ENCODE measurements at regions of chr7 and their contacts with region 1.

Region 1: DNA sequence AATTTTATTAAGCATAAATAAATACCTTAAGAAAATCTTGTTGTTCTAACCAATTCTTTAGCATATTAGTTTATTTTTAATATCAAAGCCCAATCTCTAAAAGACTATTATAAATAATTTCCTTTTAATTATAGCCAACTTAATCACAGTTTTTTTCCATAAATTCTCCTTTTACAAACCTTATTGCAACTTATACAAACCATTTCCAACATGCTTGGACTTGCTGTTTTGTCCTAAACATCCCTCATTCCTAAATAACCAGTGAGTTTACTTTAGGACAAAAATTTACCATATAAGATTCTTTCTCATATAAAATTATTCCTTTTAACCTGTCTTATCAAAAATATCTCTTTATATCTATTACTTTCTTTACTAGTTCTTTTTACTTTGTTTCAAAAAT is 25.2 kb upstream of the LSM8 start:
- DNase-seq: peak; percentile 30
- H3K4me3 ChIP-seq: no peak overlapping the region
- H3K27ac ChIP-seq: no peak overlapping the region
- H3K4me1 ChIP-seq: no peaks in the 10 kb centered on the region
- CTCF ChIP-seq: no peak

Region 2: DNA sequence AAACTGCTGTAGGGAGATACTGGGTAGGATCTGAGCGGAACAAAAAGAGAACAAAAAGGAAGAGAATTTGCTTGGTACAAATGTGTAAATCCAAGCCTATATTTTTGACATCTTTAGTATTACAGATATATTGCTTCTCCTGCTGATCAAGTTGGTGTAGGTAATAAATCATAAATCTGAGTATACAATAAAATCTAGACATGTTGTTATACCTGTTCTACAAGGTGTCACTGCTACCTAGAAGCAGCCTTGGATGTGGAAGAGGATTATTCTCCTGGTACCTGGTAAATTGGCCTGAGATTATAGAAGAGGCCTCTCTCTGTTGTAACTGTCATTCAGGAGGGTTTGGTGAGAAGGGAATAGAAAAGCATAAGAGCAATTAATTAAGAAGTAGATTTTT is 64.7 kb before region 1 on chr7:
- CTCF ChIA-PET with region 1: no interaction called
- POLR2A ChIA-PET with region 1: no interaction called
- intact Hi-C with region 1: loop called (anchors 2 kb)
- DNase-seq: no peak
- H3K4me3 ChIP-seq: no peak overlapping the region
- H3K27ac ChIP-seq: no peak overlapping the region
- H3K4me1 ChIP-seq: no peaks in the 10 kb centered on the region
- CTCF ChIP-seq: no peak

Region 3: DNA sequence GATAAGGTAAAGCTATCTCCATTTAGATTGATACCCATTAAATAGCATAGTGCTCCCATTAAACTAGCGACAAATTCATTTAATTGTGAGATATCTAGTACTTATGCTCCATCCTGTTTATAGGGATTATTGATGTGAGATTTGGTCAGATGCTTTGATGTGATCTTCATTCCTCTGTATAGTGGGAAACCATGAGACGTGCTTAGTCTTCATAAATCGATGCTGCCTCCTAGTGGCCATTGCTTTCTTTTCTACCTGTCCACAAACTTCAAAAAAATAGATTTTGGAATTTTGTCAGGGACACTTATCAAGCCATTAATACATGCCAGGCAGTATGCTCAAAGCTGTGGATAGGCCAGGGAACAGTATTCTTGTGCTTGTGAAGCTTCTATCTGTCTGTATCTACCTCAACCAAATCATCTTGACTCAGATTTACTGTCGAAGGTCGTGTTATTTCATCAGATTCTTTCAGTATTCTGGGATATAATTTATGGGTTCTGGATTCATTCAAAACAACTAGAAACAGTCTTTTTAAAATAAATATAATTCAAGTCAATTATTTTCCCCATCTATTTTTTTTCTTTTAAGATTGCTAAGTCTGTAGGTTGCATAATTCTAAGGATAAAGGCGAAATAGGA is 37.2 kb after region 1 on chr7:
- CTCF ChIA-PET with region 1: no interaction called
- POLR2A ChIA-PET with region 1: no interaction called
- intact Hi-C with region 1: no loop called
- DNase-seq: peak; percentile 75
- H3K4me3 ChIP-seq: no peak overlapping the region
- H3K27ac ChIP-seq: no peak overlapping the region
- H3K4me1 ChIP-seq: no peaks in the 10 kb centered on the region
- CTCF ChIP-seq: peak; percentile 93

Measured in OCI-LY7 (cell line).